Mammary epithelial cell (primary cell): ENCODE measurements at regions of chr17 and their contacts with region 1.

Region 1: DNA sequence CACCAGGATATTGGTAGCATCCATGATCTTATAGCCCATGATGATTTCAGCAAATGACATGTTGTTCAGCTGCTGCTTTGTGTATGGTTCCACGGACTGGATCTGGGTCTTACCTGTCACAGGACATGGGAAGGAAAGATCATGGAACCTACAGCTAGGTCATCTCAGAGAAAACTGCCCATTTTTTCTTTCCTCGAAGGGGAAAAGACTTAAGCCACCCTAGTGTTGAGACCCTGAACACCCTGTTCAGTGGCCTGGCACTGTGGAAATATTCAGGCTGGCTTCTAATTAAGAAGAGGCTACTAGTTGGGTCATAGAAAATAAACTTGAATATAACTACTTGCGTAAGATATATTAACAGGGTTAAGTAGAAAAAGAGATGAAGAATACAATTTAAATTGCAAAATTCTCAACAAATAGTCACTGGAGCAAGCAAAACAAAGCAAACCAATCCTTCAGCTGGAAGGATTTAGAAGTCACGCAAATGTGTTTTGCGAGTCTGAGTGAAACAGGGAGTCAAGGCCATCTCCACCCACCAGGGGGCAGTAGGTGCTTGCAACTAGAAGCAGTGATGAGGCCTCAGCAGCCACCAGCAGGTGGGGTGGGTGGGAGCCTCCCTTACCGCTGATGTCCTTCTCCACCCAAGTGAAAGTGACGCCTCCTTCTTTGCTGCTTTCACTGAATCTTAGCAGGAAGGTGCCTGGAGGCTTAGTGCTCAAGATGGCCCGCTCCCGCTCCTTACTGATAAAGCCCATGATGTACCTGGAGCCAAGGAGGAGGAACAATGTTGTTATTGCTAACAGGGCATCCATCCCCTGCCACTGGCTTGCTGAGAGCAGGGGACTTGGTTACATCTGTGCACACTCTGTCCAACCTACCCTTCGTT is 34.3 kb downstream of the STAT5A start:
- DNase-seq: peak; percentile 78
- H3K4me3 ChIP-seq: no peak overlapping the region
- H3K27ac ChIP-seq: no peak overlapping the region
- H3K4me1 ChIP-seq: peaks cover 29% of the 10 kb centered on the region
- H3K27me3 ChIP-seq: no peaks in the 10 kb centered on the region
- CTCF ChIP-seq: peak; percentile 100

Region 2: DNA sequence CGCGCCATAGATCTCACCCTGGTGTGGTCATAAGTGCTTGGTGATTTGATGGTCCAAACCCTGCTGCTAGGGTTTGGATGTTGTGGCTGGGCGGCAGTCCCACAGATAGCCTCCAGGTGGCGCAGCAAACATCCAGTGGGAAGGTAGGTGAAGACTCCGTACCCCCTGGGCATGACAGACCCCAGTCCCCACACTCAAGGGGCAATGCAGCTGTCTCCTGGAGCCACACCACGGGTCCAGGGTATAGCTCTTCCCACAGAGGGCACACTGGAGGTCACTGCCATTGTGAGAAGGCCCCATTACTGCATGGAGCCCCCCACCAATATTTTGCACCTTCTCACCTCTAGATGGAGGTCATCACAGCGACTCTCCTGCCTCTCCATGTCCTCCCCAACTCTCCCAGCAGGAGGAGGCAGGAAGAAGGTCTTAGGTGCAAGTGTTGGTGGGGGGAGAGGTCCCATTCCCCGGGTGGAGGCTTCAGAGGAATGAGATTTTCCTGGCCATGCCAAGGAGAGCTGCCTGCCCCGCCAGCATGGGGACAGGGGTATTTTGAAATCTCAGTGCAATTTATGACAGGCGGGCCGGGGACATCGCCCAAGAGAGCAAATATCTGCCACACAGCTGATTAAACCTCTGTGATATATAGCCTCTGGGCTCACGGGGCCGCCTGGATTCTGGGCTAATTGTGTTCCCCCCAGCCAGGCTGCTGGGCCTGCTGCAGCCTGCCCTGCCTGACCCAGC is 255.1 kb before region 1 on chr17:
- CTCF ChIA-PET with region 1: no interaction called
- dilution Hi-C with region 1: no loop called
- in situ Hi-C with region 1: no loop called
- intact Hi-C with region 1: no loop called
- DNase-seq: no peak
- H3K4me3 ChIP-seq: no peak overlapping the region
- H3K27ac ChIP-seq: no peak overlapping the region
- H3K4me1 ChIP-seq: peaks cover 4% of the 10 kb centered on the region
- H3K27me3 ChIP-seq: peaks cover 7% of the 10 kb centered on the region
- CTCF ChIP-seq: peak; percentile 88 to 93

Region 3: DNA sequence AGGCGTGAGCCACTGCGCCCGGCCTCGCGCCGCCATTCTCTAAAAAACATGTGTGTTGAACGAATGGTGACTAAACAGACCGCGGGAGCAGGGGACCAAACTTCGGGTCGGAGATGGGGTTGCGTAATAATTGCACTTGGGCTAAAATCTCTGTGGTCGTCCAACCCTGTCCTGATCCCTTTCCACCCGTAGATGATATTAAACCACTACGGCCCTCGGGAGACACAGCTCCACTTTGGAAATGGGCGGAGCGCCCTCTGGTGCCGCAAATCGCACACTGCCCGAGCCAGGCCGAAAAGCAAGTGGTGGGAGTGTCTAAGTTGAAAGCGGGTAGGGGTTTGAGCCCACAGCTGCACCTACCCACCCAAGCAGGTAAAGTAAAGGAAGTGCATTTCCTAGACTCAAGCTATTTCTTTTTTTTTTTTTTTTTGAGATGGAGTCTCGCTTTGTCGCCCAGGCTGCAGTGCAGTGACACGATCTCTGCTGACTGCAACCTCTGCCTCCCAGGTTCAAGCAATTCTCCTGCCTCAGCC is 83.4 kb after region 1 on chr17:
- CTCF ChIA-PET with region 1: no interaction called
- dilution Hi-C with region 1: no loop called
- in situ Hi-C with region 1: loop called (anchors 5 kb)
- intact Hi-C with region 1: loop called (anchors 1 kb)
- DNase-seq: peak; percentile 26
- H3K4me3 ChIP-seq: no peak overlapping the region
- H3K27ac ChIP-seq: no peak overlapping the region
- H3K4me1 ChIP-seq: peaks cover 50% of the 10 kb centered on the region
- H3K27me3 ChIP-seq: no peaks in the 10 kb centered on the region
- CTCF ChIP-seq: peak; percentile 45 to 76

Region 4: DNA sequence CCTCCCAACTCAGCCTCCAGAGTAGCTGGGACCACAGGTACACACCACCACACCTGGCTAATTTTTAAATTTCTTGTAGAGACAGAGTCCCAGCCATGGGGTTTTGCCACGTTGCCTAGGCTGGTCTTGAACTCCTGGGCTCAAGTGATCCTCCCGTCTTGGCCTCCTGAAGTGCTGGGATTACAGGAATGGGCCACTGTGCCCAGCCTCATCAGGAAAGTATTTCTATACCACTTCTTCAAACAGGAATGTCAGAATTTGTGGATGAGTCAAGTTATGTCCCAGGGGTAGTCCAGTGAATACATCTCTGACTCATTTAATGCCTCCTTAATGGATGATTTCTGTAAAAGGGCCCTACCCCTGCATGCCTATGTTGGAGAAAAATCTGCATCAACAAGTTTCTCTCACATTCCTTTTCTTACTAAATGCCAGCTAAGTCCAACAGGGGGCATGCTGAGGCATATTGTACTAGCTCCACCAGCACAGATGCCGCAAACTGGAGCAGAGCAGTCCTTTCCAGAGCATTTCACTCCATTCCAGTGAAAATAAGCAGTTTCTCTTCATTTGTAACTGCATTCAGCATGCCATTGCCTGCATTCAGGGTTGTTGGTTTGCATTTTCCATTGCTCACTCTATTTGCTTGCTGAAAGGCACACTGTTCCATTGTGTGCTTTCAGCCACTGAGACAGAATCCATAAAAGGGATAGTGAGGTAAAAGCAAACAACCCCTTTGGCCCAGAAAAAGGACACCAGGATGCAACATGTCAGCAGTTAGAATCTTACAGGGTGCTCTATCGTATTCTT is 105.7 kb after region 1 on chr17:
- CTCF ChIA-PET with region 1: interaction called, 5 read pairs
- dilution Hi-C with region 1: no loop called
- in situ Hi-C with region 1: no loop called
- intact Hi-C with region 1: loop called (anchors 2 kb)
- DNase-seq: peak; percentile 98
- H3K4me3 ChIP-seq: peak overlapping the region in 1 of 3 experiments; percentile 22
- H3K27ac ChIP-seq: peak overlapping the region; percentile 64
- H3K4me1 ChIP-seq: peaks cover 11% of the 10 kb centered on the region
- H3K27me3 ChIP-seq: no peaks in the 10 kb centered on the region
- CTCF ChIP-seq: peak; percentile 85 to 95

Region 5: DNA sequence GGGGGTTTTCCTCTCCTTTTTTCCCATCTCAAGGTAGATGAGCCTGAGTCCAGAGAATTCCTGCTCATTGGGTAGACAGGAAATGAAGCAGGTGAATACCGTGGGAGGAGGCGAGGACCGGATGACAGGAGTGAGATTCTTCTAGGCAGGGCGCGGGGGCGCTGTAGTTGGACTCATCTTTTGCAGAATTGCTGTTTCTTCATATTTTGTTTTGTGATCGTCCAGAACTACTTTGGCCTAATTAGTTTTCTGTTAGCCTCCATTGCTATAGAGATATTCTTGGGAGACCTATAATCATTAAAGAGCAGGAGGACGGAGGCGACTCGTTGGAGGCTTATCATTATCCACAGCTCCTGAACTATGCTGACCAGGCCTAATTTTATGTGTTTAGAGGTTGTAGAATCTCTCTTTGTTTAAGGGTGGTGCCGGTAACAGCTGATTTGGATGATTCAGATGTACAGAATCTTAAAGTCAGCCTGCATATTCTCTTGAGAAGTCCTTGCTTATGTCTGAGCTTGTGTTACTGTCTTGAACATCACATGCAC is 136.7 kb after region 1 on chr17:
- CTCF ChIA-PET with region 1: no interaction called
- dilution Hi-C with region 1: no loop called
- in situ Hi-C with region 1: no loop called
- intact Hi-C with region 1: loop called (anchors 1 kb)
- DNase-seq: peak; percentile 63
- H3K4me3 ChIP-seq: peak overlapping the region; percentile 73 to 97 (median 77)
- H3K27ac ChIP-seq: peak overlapping the region; percentile 68
- H3K4me1 ChIP-seq: peaks cover 41% of the 10 kb centered on the region
- H3K27me3 ChIP-seq: no peaks in the 10 kb centered on the region
- CTCF ChIP-seq: peak in 1 of 2 donors; percentile 51

Region 6: DNA sequence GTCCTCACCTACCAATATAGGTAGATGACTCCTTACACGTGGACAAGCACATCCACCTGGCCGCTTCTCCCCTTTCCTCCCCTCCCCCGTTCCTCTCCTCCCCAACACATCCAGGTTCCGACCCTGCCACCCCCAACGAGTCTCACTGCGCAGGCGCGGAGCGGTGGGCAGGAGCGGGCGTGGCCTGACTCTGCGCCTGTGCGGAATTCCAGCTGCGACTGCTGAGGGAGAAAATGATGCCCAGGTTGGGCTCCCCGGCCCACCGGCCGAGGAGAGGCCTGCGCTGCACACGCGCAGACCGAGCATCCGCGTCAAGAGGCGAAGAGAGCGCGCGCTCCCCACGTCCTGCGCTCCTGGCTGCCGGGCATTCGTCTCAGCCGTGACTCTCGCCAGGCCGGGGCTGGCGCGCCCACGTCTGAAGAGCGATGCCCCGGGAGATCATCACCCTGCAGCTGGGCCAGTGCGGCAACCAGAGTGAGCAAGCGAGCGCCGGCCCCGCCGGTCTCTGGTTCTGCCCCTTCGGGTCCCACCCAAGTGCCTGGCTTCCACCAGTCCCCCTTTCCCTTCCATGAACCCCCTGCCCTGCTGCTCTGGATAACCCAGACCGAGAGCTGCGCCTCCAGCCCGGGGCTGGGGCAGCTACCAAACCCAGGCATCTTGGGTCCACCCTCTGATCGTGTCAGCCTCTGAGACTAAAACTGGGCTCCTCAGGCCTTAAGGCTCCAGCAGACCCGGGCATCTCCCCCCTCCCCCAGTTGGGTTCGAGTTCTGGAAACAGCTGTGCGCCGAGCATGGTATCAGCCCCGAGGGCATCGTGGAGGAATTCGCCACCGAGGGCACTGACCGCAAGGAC is 336.7 kb after region 1 on chr17 and contains the start of gene TUBG2:
- CTCF ChIA-PET with region 1: no interaction called
- dilution Hi-C with region 1: no loop called
- in situ Hi-C with region 1: no loop called
- intact Hi-C with region 1: no loop called
- DNase-seq: peak; percentile 89
- H3K4me3 ChIP-seq: peak within 1 kb of the TSS; percentile 56 to 92 (median 67)
- H3K27ac ChIP-seq: peak within 1 kb of the TSS; percentile 53
- H3K4me1 ChIP-seq: peaks cover 16% of the 10 kb centered on the region
- H3K27me3 ChIP-seq: no peaks in the 10 kb centered on the region
- CTCF ChIP-seq: no peak
- total RNA-seq, gene TUBG2: 12.3 to 34.8 TPM